ENCODE measurements at regions of chr11 and their contacts with region 1.

Region 1: GRCh38 chr11:116895048-116895757 is 57.8 kb upstream of the APOA1 start:
- DNase-seq: no peak
- ATAC-seq: no peak
- H3K4me3 ChIP-seq: no peak overlapping the region
- H3K27ac ChIP-seq: no peak overlapping the region
- H3K4me1 ChIP-seq: no peaks in the 10 kb centered on the region
- H3K27me3 ChIP-seq: no peaks in the 10 kb centered on the region
- CTCF ChIP-seq: peak; percentile 29; the same call in 1 of the 2 replicates
- POLR2A ChIP-seq: no peak
- RAD21 ChIP-seq: no peak

Region 2: GRCh38 chr11:116879800-116880625 is 15.2 kb before region 1 on chr11:
- CTCF ChIA-PET with region 1: no interaction called
- POLR2A ChIA-PET with region 1: no interaction called
- dilution Hi-C with region 1: no loop called
- in situ Hi-C with region 1: no loop called
- intact Hi-C with region 1: no loop called
- DNase-seq: peak; percentile 85
- ATAC-seq: peak; percentile 93
- H3K4me3 ChIP-seq: no peak overlapping the region
- H3K27ac ChIP-seq: no peak overlapping the region
- H3K4me1 ChIP-seq: peaks cover 7% of the 10 kb centered on the region
- H3K27me3 ChIP-seq: no peaks in the 10 kb centered on the region
- CTCF ChIP-seq: peak; percentile 79
- POLR2A ChIP-seq: no peak
- RAD21 ChIP-seq: peak; percentile 89

Region 3: DNA sequence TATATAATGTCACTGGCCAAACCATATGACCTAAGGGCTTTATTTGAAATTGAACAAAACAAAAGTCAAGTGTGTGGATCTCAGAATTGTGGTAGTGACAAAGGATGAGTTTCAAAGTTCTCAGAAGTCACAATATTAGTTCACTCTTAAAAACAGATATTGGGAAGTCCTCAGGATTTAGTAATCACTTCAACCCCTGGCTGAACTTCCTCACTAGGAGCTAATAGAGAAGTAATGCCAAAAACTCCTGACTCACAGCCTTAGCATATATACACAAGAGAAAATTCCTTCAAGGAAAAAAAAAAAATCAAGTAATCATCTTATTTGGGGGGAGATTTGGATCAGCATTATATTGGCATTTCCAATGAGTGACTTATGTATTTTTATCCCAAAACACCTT is 17.8 kb after region 1 on chr11:
- CTCF ChIA-PET with region 1: no interaction called
- POLR2A ChIA-PET with region 1: no interaction called
- dilution Hi-C with region 1: no loop called
- in situ Hi-C with region 1: no loop called
- intact Hi-C with region 1: loop called (anchors 2 kb)
- DNase-seq: peak; percentile 90
- ATAC-seq: peak; percentile 84
- H3K4me3 ChIP-seq: no peak overlapping the region
- H3K27ac ChIP-seq: no peak overlapping the region
- H3K4me1 ChIP-seq: peaks cover 15% of the 10 kb centered on the region
- H3K27me3 ChIP-seq: no peaks in the 10 kb centered on the region
- CTCF ChIP-seq: no peak
- POLR2A ChIP-seq: no peak
- RAD21 ChIP-seq: no peak

Measured in IMR-90 (cell line).